ENCODE measurements at regions of chr18 and their contacts with region 1.

Region 1: DNA sequence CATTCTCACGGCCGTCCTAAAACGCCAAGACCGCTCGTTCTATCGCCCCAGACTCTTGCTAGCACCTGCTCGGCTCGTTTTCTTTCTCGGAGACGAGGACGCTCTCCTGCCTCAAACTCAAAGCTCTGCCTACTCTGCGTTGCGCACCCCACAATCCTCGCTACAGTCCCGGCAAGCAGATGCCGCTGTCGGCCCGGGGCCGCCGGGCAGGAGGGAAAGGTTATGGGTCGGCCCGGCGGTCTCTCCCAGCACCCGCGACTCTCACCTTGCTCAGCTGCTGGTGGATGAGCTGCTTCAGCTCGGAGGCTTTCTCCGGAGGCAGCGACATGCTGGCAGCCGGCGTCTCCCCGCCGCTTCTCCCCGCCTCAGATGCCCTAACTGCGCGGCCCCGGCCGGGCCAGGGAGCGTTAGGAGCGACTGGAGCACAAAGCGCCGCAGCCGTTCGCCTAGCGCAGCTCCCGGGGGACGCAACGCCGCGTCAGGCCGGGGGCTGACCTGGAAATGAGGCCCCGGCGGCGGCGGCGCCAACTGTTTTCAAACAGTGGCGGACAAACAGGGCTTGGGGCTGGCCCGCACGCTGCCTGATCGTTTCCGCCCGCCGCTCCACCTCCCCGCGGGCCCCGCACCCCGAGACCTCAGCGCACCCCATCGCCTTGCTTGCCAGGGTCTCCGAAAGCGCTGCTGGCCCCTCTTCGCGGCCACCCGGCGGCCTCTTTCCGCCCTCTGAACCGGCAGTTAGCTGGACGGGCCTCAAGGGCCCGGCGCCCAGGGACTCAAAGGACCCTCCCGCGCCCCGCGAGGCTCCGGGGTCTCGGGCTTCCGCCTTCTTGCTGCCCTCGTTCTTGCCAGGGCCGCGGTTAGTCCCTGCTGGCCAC is at the starts of genes CEP76 and PSMG2:
- DNase-seq: peak; percentile 90
- ATAC-seq: peak; percentile 85
- H3K4me3 Mint-ChIP-seq: peak within 1 kb of the TSS; percentile 96
- H3K27ac Mint-ChIP-seq: peak within 1 kb of the TSS; percentile 96
- H3K4me1 Mint-ChIP-seq: peaks cover 30% of the 10 kb centered on the region
- H3K27me3 Mint-ChIP-seq: no peaks in the 10 kb centered on the region
- total RNA-seq, gene CEP76: 12.5 to 13.9 TPM
- total RNA-seq, gene PSMG2: 113 to 118 TPM

Region 2: GRCh38 chr18:11908182-11909060 is 794.0 kb before region 1 on chr18 and contains the start of gene MPPE1:
- CTCF ChIA-PET with region 1: no interaction called
- POLR2A ChIA-PET with region 1: no interaction called
- intact Hi-C with region 1: loop called in 1 of 2 experiments (anchors 2 kb)
- DNase-seq: peak; percentile 93
- ATAC-seq: peak; percentile 93
- H3K4me3 Mint-ChIP-seq: peak within 1 kb of the TSS; percentile 88
- H3K27ac Mint-ChIP-seq: peak within 1 kb of the TSS; percentile 94
- H3K4me1 Mint-ChIP-seq: peaks cover 18% of the 10 kb centered on the region
- H3K27me3 Mint-ChIP-seq: no peaks in the 10 kb centered on the region
- total RNA-seq, gene MPPE1: 22.4 to 29.6 TPM

Region 3: GRCh38 chr18:12721495-12722275 is 19.2 kb after region 1 on chr18:
- CTCF ChIA-PET with region 1: interaction called, 5 read pairs
- POLR2A ChIA-PET with region 1: interaction called, 12 read pairs
- intact Hi-C with region 1: no loop called
- DNase-seq: no peak
- ATAC-seq: peak; percentile 30
- H3K4me3 Mint-ChIP-seq: no peak overlapping the region
- H3K27ac Mint-ChIP-seq: peak overlapping the region; percentile 23
- H3K4me1 Mint-ChIP-seq: peaks cover 7% of the 10 kb centered on the region
- H3K27me3 Mint-ChIP-seq: no peaks in the 10 kb centered on the region

Region 4: GRCh38 chr18:12990967-12991838 is 288.7 kb after region 1 on chr18 and contains the start of gene CEP192:
- CTCF ChIA-PET with region 1: no interaction called
- POLR2A ChIA-PET with region 1: interaction called, 5 read pairs
- intact Hi-C with region 1: loop called (anchors 1 to 5 kb)
- DNase-seq: peak; percentile 98
- ATAC-seq: peak; percentile 90
- H3K4me3 Mint-ChIP-seq: peak within 1 kb of the TSS; percentile 87
- H3K27ac Mint-ChIP-seq: peak within 1 kb of the TSS; percentile 93
- H3K4me1 Mint-ChIP-seq: peaks cover 21% of the 10 kb centered on the region
- H3K27me3 Mint-ChIP-seq: no peaks in the 10 kb centered on the region
- total RNA-seq, gene CEP192: 36.0 to 39.3 TPM

Measured in activated CD4-positive, alpha-beta T cell treated with anti-CD3 and anti-CD28 coated beads for 36 hours (primary cell).